ENCODE measurements at regions of chr5 and their contacts with region 1.

Region 1: GRCh38 chr5:103119765-103120606 is at the starts of genes GIN1 and PPIP5K2:
- DNase-seq: peak; percentile 91 to 98 (median 97)
- ATAC-seq: peak; percentile 96
- H3K4me3 ChIP-seq: peak within 1 kb of the TSS; percentile 92
- H3K4me3 Mint-ChIP-seq: peak within 1 kb of the TSS; percentile 89 to 100 (median 96)
- H3K27ac ChIP-seq: peak within 1 kb of the TSS; percentile 90
- H3K27ac Mint-ChIP-seq: peak within 1 kb of the TSS; percentile 92 to 100 (median 96)
- H3K4me1 ChIP-seq: peaks cover 9 to 29% of the 10 kb centered on the region in 2 donors
- H3K4me1 Mint-ChIP-seq: peaks cover 24 to 74% (median 65%) of the 10 kb centered on the region in 7 donors
- H3K27me3 ChIP-seq: no peaks in the 10 kb centered on the region
- H3K27me3 Mint-ChIP-seq: no peaks in the 10 kb centered on the region
- total RNA-seq, gene GIN1: 4.0 to 20.9 (median 9.6) TPM
- total RNA-seq, gene PPIP5K2: 59.4 to 77.4 (median 69.3) TPM

Region 2: DNA sequence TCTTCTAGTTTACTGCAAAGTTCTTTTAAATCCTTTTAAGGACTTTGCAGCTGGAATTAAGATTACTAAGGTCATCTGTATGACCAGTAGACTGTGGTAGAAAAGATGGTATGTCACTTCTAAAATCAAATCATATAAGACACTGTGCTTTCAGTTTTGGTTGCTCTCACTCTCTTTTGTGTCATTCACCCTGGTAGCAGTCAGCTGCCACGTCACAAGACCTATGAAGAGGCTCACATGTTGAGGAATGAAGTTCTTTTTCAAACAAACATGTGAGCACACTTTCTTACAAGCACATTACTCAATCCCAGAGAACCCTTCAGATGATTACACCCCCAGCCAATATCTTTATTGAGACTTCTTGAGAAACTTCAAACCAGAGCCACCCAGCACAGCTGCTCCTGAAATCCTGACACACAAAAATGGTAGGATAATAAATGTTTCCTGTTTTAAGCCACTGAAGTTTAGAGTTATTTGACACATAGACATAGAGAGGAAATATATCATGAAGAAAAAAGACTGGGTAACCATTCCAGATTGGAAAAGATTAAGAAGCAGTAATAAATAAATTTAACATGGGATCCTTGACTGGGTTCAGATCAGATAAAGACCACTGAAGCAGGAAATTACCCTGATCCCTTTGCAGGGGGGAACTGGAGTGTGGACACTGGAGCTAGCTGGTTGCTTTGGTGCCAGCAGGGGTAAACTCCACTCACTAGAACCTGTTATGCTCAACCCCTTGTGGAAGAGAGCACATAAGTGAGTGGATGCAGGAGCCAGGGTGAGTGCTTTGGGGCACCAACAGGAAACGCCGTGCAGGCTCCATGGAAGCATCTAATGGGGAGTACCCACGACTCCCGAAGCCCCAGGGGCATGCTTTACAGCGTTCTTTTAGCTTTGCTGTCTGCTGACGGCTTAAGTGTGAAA is 888.0 kb before region 1 on chr5:
- CTCF ChIA-PET with region 1: no interaction called
- POLR2A ChIA-PET with region 1: no interaction called
- intact Hi-C with region 1: no loop called
- DNase-seq: peak in 1 of 9 donors; percentile 8
- ATAC-seq: peak; percentile 26
- H3K4me3 ChIP-seq: no peak overlapping the region
- H3K4me3 Mint-ChIP-seq: no peak overlapping the region
- H3K27ac ChIP-seq: no peak overlapping the region
- H3K27ac Mint-ChIP-seq: no peak overlapping the region
- H3K4me1 ChIP-seq: no peaks in the 10 kb centered on the region
- H3K4me1 Mint-ChIP-seq: peaks cover 6 to 20% (median 11%) of the 10 kb centered on the region in 7 donors
- H3K27me3 ChIP-seq: no peaks in the 10 kb centered on the region
- H3K27me3 Mint-ChIP-seq: peaks cover 0 to 10% (median 0%) of the 10 kb centered on the region in 5 donors

Region 3: GRCh38 chr5:102296178-102296817 is 823.7 kb before region 1 on chr5 and contains the start of gene SLCO4C1:
- CTCF ChIA-PET with region 1: no interaction called
- POLR2A ChIA-PET with region 1: interaction called, 4 read pairs
- intact Hi-C with region 1: loop called in 1 of 2 experiments (anchors 5 kb)
- DNase-seq: peak; percentile 28 to 81 (median 53)
- ATAC-seq: peak; percentile 92
- H3K4me3 ChIP-seq: peak within 1 kb of the TSS; percentile 76
- H3K4me3 Mint-ChIP-seq: peak within 1 kb of the TSS; percentile 83 to 90 (median 88)
- H3K27ac ChIP-seq: peak within 1 kb of the TSS; percentile 20
- H3K27ac Mint-ChIP-seq: peak within 1 kb of the TSS; percentile 25 to 78 (median 62)
- H3K4me1 ChIP-seq: peaks cover 0 to 5% of the 10 kb centered on the region in 2 donors
- H3K4me1 Mint-ChIP-seq: peaks cover 12 to 28% (median 23%) of the 10 kb centered on the region in 7 donors
- H3K27me3 ChIP-seq: no peaks in the 10 kb centered on the region
- H3K27me3 Mint-ChIP-seq: peaks cover 0 to 13% (median 4%) of the 10 kb centered on the region in 5 donors
- total RNA-seq, gene SLCO4C1: 0.05 to 3.7 (median 0.56) TPM

Region 4: GRCh38 chr5:102755686-102756371 is 364.2 kb before region 1 on chr5:
- CTCF ChIA-PET with region 1: no interaction called
- POLR2A ChIA-PET with region 1: interaction called, 5 read pairs
- intact Hi-C with region 1: loop called (anchors 1 kb)
- DNase-seq: peak; percentile 22 to 70 (median 39)
- ATAC-seq: peak; percentile 86
- H3K4me3 ChIP-seq: peak overlapping the region; percentile 83
- H3K4me3 Mint-ChIP-seq: peak overlapping the region; percentile 90 to 99 (median 94)
- H3K27ac ChIP-seq: peak overlapping the region; percentile 64
- H3K27ac Mint-ChIP-seq: peak overlapping the region; percentile 57 to 95 (median 91)
- H3K4me1 ChIP-seq: peaks cover 11 to 16% of the 10 kb centered on the region in 2 donors
- H3K4me1 Mint-ChIP-seq: peaks cover 22 to 45% (median 40%) of the 10 kb centered on the region in 7 donors
- H3K27me3 ChIP-seq: no peaks in the 10 kb centered on the region
- H3K27me3 Mint-ChIP-seq: peaks cover 0 to 15% (median under 1%) of the 10 kb centered on the region in 5 donors

Region 5: GRCh38 chr5:103014990-103015389 is 105.0 kb before region 1 on chr5:
- CTCF ChIA-PET with region 1: no interaction called
- POLR2A ChIA-PET with region 1: no interaction called
- intact Hi-C with region 1: no loop called
- DNase-seq: no peak
- ATAC-seq: no peak
- H3K4me3 ChIP-seq: no peak overlapping the region
- H3K4me3 Mint-ChIP-seq: no peak overlapping the region
- H3K27ac ChIP-seq: no peak overlapping the region
- H3K27ac Mint-ChIP-seq: no peak overlapping the region
- H3K4me1 ChIP-seq: no peaks in the 10 kb centered on the region
- H3K4me1 Mint-ChIP-seq: peaks cover 0 to 13% (median 0%) of the 10 kb centered on the region in 7 donors
- H3K27me3 ChIP-seq: no peaks in the 10 kb centered on the region
- H3K27me3 Mint-ChIP-seq: no peaks in the 10 kb centered on the region

Region 6: DNA sequence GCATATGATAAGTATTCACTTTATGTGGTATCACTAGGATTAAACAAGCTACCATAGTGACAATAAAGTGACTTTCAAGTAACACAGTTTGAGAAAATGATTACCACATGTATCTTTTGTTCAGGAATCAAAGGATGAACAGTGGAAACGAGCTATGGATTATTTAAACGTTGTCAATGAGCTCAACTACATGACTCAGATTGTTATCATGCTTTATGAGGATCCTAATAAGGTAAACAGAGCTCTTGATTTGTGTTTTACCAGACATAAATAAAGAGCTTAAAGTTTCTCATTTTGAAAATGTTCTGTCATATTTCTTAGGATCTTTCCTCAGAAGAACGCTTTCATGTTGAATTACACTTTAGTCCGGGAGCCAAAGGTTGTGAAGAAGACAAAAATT is 57.6 kb after region 1 on chr5:
- CTCF ChIA-PET with region 1: no interaction called
- POLR2A ChIA-PET with region 1: no interaction called
- intact Hi-C with region 1: no loop called
- DNase-seq: no peak
- ATAC-seq: no peak
- H3K4me3 ChIP-seq: no peak overlapping the region
- H3K4me3 Mint-ChIP-seq: no peak overlapping the region
- H3K27ac ChIP-seq: no peak overlapping the region
- H3K27ac Mint-ChIP-seq: peak overlapping the region in 1 of 9 donors; percentile 28
- H3K4me1 ChIP-seq: no peaks in the 10 kb centered on the region
- H3K4me1 Mint-ChIP-seq: peaks cover 0 to 2% (median 0%) of the 10 kb centered on the region in 7 donors
- H3K27me3 ChIP-seq: no peaks in the 10 kb centered on the region
- H3K27me3 Mint-ChIP-seq: no peaks in the 10 kb centered on the region

Region 7: GRCh38 chr5:103211576-103212561 is 91.9 kb after region 1 on chr5:
- CTCF ChIA-PET with region 1: no interaction called
- POLR2A ChIA-PET with region 1: no interaction called
- intact Hi-C with region 1: loop called in 1 of 2 experiments (anchors 2 kb)
- DNase-seq: no peak
- ATAC-seq: peak; percentile 12
- H3K4me3 ChIP-seq: no peak overlapping the region
- H3K4me3 Mint-ChIP-seq: peak overlapping the region in 4 of 10 donors; percentile 7 to 71 (median 21)
- H3K27ac ChIP-seq: no peak overlapping the region
- H3K27ac Mint-ChIP-seq: peak overlapping the region in 4 of 9 donors; percentile 41 to 69 (median 56)
- H3K4me1 ChIP-seq: peaks cover 0 to 7% of the 10 kb centered on the region in 2 donors
- H3K4me1 Mint-ChIP-seq: peaks cover 10 to 31% (median 14%) of the 10 kb centered on the region in 7 donors
- H3K27me3 ChIP-seq: no peaks in the 10 kb centered on the region
- H3K27me3 Mint-ChIP-seq: no peaks in the 10 kb centered on the region

Region 8: DNA sequence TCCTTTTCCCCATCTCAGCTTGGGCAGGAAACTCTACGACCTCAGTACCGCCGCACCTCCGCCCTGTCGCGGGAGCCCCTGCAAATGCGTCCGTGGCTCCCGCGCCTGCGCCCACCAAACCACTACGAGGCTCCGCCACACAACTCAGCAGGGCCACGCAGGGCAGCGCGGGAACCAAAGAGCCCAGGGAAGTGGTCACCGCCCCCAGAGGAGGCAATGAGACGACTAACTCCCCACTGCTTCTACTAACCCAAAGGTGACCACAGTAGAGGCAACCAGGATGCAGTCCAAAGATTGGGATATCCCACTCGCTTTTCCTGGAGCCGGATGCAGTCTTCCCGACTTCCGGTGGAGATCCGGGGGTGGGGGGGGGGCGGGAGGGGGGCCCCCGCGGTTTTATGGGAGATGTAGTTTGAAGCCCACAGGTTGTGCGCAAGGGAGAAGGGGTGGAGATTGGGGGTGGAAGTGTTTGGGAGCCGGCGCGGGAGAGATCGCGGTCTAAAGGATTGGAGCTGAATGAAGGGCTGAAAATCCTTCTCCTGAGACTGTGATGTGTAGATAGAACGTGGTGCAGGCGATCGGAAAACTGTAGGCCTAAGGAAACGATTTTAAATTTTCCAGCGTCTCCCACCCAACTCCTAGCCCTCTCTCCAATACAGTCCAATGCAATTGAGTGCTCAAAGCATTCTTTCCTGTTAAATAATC is 442.6 kb after region 1 on chr5 and contains the start of gene NUDT12:
- CTCF ChIA-PET with region 1: no interaction called
- POLR2A ChIA-PET with region 1: interaction called, 4 read pairs
- intact Hi-C with region 1: loop called in 1 of 2 experiments (anchors 1 kb)
- DNase-seq: peak; percentile 8 to 57 (median 34)
- ATAC-seq: peak; percentile 78
- H3K4me3 ChIP-seq: peak within 1 kb of the TSS; percentile 66
- H3K4me3 Mint-ChIP-seq: peak within 1 kb of the TSS; percentile 88 to 98 (median 92)
- H3K27ac ChIP-seq: peak within 1 kb of the TSS; percentile 65
- H3K27ac Mint-ChIP-seq: peak within 1 kb of the TSS in 8 of 9 donors; percentile 72 to 93 (median 86)
- H3K4me1 ChIP-seq: no peaks in the 10 kb centered on the region
- H3K4me1 Mint-ChIP-seq: peaks cover 9 to 40% (median 20%) of the 10 kb centered on the region in 7 donors
- H3K27me3 ChIP-seq: no peaks in the 10 kb centered on the region
- H3K27me3 Mint-ChIP-seq: peaks cover 0 to 5% (median 4%) of the 10 kb centered on the region in 5 donors
- total RNA-seq, gene NUDT12: 0.75 to 4.7 (median 1.7) TPM